ENCODE measurements at regions of chr1 and their contacts with region 1.

Region 1: DNA sequence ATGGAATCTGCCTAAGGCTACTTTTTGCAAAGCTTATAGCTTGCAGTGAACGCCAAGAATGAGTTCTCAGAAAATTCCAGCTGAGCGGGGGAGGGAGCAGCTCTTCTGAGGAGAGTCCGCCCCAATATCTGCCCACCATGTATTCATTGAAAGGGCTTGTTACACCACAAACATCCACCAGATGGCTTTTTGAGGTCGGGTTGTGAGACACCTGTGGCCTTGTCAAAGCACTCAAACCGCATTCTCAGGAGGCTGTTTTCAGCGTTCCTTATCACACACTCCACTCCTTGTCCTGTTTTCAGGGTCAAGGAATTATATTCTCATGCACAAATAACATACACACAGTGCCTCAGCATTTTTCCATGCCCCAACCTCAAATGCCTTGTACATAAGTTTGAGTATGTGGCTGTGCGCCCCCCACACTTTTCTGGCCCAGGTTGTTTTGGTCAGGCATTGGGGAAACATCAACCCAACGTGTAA is 3.9 kb upstream of the C4BPB start:
- DNase-seq: peak; percentile 11 to 67 (median 44)
- H3K4me3 ChIP-seq: no peak overlapping the region
- H3K4me3 Mint-ChIP-seq: no peak overlapping the region
- H3K27ac ChIP-seq: no peak overlapping the region
- H3K27ac Mint-ChIP-seq: peak overlapping the region in 1 of 8 donors; percentile 15
- H3K4me1 ChIP-seq: peaks cover 11% of the 10 kb centered on the region
- H3K4me1 Mint-ChIP-seq: peaks cover 6 to 19% (median 13%) of the 10 kb centered on the region in 3 donors
- H3K27me3 ChIP-seq: no peaks in the 10 kb centered on the region
- H3K27me3 Mint-ChIP-seq: peaks cover 15 to 36% of the 10 kb centered on the region in 2 donors

Region 2: GRCh38 chr1:206826405-206826804 is 258.3 kb before region 1 on chr1:
- CTCF ChIA-PET with region 1: no interaction called
- POLR2A ChIA-PET with region 1: no interaction called
- DNase-seq: no peak
- H3K4me3 ChIP-seq: no peak overlapping the region
- H3K4me3 Mint-ChIP-seq: no peak overlapping the region
- H3K27ac ChIP-seq: no peak overlapping the region
- H3K27ac Mint-ChIP-seq: peak overlapping the region in 2 of 8 donors; percentile 55 to 72
- H3K4me1 ChIP-seq: peaks cover 28% of the 10 kb centered on the region
- H3K4me1 Mint-ChIP-seq: peaks cover 37 to 44% (median 41%) of the 10 kb centered on the region in 3 donors
- H3K27me3 ChIP-seq: no peaks in the 10 kb centered on the region
- H3K27me3 Mint-ChIP-seq: no peaks in the 10 kb centered on the region

Region 3: DNA sequence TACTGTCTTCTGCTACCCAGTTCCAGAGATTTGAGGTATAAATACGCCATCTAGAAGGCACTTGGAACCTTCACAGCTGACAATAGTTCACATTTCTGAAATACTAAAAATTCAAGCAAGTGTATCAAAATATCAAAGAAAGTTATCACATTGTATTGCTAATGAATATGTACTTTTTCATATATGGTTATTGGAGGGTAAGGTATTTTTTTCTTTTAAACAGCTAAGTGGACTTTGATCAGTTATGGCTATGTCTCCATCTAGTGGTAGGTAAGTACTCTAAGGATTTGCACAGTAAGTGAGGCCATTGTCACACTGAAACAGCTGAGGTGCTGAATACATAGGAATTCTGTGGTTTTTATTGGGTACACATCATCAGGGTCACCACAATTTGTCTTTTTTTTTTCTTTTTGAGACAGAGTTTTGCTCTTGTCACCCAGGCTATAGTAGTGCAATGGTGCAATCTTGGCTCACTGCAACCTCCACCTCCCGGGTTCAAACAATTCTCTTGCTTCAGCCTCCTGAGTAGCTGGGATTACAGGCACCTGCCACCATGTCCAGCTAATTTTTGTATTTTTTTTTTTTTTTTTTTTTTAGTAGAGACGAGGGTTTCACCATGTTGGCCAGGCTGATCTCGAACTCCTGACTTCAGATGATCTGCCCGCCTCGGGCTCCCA is 320.2 kb after region 1 on chr1:
- CTCF ChIA-PET with region 1: interaction called, 52 read pairs
- POLR2A ChIA-PET with region 1: no interaction called
- DNase-seq: peak in 2 of 5 donors; percentile 47 to 54
- H3K4me3 ChIP-seq: no peak overlapping the region
- H3K4me3 Mint-ChIP-seq: no peak overlapping the region
- H3K27ac ChIP-seq: no peak overlapping the region
- H3K27ac Mint-ChIP-seq: no peak overlapping the region
- H3K4me1 ChIP-seq: no peaks in the 10 kb centered on the region
- H3K4me1 Mint-ChIP-seq: no peaks in the 10 kb centered on the region
- H3K27me3 ChIP-seq: no peaks in the 10 kb centered on the region
- H3K27me3 Mint-ChIP-seq: peaks cover 4 to 12% of the 10 kb centered on the region in 2 donors

Measured in CD8-positive, alpha-beta memory T cell (primary cell).